Caco-2 (cell line): ENCODE measurements at regions of chr16 and their contacts with region 1.

Region 1: DNA sequence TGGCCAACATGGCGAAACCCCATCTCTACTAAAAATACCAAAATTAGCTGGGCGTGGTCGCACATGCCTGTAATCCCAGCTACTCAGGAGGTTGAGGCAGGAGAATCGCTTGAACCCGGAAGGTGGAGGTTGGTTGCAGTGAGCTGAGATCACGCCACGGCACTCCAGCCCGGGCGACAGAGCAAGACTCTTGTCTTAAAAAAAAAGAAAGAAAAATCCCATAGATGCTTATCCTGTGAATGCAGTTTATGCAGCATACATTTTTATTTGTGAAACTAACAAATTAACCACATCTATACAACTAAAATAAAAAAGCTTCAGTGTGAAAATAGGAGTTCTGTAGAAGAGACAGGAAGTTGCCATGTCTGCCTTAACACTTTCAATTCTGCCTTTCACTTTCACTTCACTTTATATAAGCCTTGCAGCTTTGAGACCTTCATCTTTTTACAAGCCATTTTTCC is 7.1 kb downstream of the IGSF6 start:
- DNase-seq: no peak
- H3K4me3 ChIP-seq: no peak overlapping the region
- H3K4me3 Mint-ChIP-seq: no peak overlapping the region
- H3K27ac Mint-ChIP-seq: no peak overlapping the region
- H3K4me1 ChIP-seq: no peaks in the 10 kb centered on the region
- H3K4me1 Mint-ChIP-seq: no peaks in the 10 kb centered on the region
- H3K27me3 ChIP-seq: no peaks in the 10 kb centered on the region
- H3K27me3 Mint-ChIP-seq: no peaks in the 10 kb centered on the region
- CTCF ChIP-seq: no peak

Region 2: GRCh38 chr16:21584817-21585216 is 60.5 kb before region 1 on chr16:
- CTCF ChIA-PET with region 1: no interaction called
- POLR2A ChIA-PET with region 1: no interaction called
- intact Hi-C with region 1: loop called (anchors 1 kb)
- DNase-seq: no peak
- H3K4me3 ChIP-seq: no peak overlapping the region
- H3K4me3 Mint-ChIP-seq: no peak overlapping the region
- H3K27ac Mint-ChIP-seq: no peak overlapping the region
- H3K4me1 ChIP-seq: no peaks in the 10 kb centered on the region
- H3K4me1 Mint-ChIP-seq: no peaks in the 10 kb centered on the region
- H3K27me3 ChIP-seq: no peaks in the 10 kb centered on the region; the same call in 1 of the 2 replicates
- H3K27me3 Mint-ChIP-seq: no peaks in the 10 kb centered on the region
- CTCF ChIP-seq: no peak

Region 3: DNA sequence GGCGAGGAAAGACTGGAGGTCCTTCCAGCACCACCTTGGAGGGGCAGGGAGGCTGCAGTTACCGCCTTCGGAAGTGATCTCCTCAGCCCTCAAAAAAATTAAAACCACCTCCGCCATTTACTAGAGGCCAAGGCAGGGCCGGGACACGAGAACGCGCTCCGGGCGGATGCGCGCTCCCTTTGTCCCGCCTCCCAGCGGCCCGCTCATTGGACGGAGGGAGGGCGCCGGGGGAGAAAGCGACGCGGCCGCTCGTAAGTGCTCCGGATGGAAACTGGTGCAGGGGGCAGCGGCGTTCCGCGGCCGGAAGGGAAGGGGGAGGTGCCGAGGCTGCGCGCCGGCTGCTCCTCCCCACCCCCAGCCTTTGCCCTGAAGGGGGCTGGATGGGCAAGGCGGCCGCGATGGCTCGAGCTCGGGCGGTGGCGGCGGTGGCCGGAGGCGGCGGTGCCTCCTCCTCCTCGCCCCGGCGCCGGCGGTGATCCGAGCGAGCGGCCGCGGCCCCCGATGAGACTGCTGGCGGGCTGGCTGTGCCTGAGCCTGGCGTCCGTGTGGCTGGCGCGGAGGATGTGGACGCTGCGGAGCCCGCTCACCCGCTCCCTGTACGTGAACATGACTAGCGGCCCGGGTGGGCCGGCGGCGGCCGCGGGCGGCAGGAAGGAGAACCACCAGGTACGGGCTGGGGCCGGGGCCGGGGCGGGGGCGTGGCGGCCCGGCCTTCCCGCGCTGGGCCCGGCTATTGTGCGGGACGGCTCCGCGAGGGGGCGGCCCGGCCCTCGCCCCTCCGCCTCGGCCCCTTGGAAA is 45.9 kb before region 1 on chr16 and contains the start of gene METTL9:
- CTCF ChIA-PET with region 1: interaction called, 4 read pairs
- POLR2A ChIA-PET with region 1: no interaction called
- intact Hi-C with region 1: loop called (anchors 1 kb)
- DNase-seq: peak; percentile 93 to 94
- H3K4me3 ChIP-seq: peak within 1 kb of the TSS; percentile 91
- H3K4me3 Mint-ChIP-seq: peak within 1 kb of the TSS; percentile 81
- H3K27ac Mint-ChIP-seq: peak within 1 kb of the TSS; percentile 76
- H3K4me1 ChIP-seq: no peaks in the 10 kb centered on the region
- H3K4me1 Mint-ChIP-seq: no peaks in the 10 kb centered on the region
- H3K27me3 ChIP-seq: no peaks in the 10 kb centered on the region
- H3K27me3 Mint-ChIP-seq: no peaks in the 10 kb centered on the region
- CTCF ChIP-seq: peak in 1 of 2 experiments; percentile 23
- total RNA-seq, gene METTL9: 50.7 and 55.3 TPM in 2 replicates

Region 4: GRCh38 chr16:21708533-21709115 is 63.3 kb after region 1 on chr16:
- CTCF ChIA-PET with region 1: no interaction called
- POLR2A ChIA-PET with region 1: no interaction called
- intact Hi-C with region 1: no loop called
- DNase-seq: peak; percentile 61 to 75
- H3K4me3 ChIP-seq: no peak overlapping the region
- H3K4me3 Mint-ChIP-seq: no peak overlapping the region
- H3K27ac Mint-ChIP-seq: no peak overlapping the region
- H3K4me1 ChIP-seq: no peaks in the 10 kb centered on the region
- H3K4me1 Mint-ChIP-seq: no peaks in the 10 kb centered on the region
- H3K27me3 ChIP-seq: no peaks in the 10 kb centered on the region
- H3K27me3 Mint-ChIP-seq: no peaks in the 10 kb centered on the region
- CTCF ChIP-seq: peak; percentile 54 to 76